Activated T-helper 1 cell treated with anti-CD3 and anti-CD28 coated beads, Interleukin-12 subunit alpha, Interleukin-12 subunit beta, Interleukin-2, Interleukin-4 antibody, amounts not matched to agents 30 ng/mL and 10 ng/mL and 1 ng/mL, durations not matched to agents 14 hours and 24 hours and 36 hours (primary cell): ENCODE measurements at regions of chr16 and their contacts with region 1.

Region 1: GRCh38 chr16:27446721-27447120 is 44.7 kb downstream of the IL21R start:
- DNase-seq: peak; percentile 58
- H3K4me3 Mint-ChIP-seq: peak overlapping the region; percentile 41
- H3K27ac Mint-ChIP-seq: peak overlapping the region; percentile 77
- H3K4me1 Mint-ChIP-seq: peaks cover 64% of the 10 kb centered on the region
- H3K27me3 Mint-ChIP-seq: no peaks in the 10 kb centered on the region

Region 2: GRCh38 chr16:27431773-27432532 is 14.8 kb before region 1 on chr16:
- intact Hi-C with region 1: loop called (anchors 2 kb)
- DNase-seq: no peak
- H3K4me3 Mint-ChIP-seq: no peak overlapping the region
- H3K27ac Mint-ChIP-seq: peak overlapping the region; percentile 67
- H3K4me1 Mint-ChIP-seq: peaks cover 63% of the 10 kb centered on the region
- H3K27me3 Mint-ChIP-seq: peaks cover 2% of the 10 kb centered on the region

Region 3: GRCh38 chr16:27549859-27550581 is 103.3 kb after region 1 on chr16 and contains the starts of genes GTF3C1 and KATNIP:
- intact Hi-C with region 1: no loop called
- DNase-seq: peak; percentile 100
- H3K4me3 Mint-ChIP-seq: peak within 1 kb of the TSS; percentile 99
- H3K27ac Mint-ChIP-seq: peak within 1 kb of the TSS; percentile 90
- H3K4me1 Mint-ChIP-seq: peaks cover 41% of the 10 kb centered on the region
- H3K27me3 Mint-ChIP-seq: no peaks in the 10 kb centered on the region
- total RNA-seq, gene GTF3C1: 66.5 and 69.9 TPM in 2 replicates
- total RNA-seq, gene KATNIP: 12.4 and 17.6 TPM in 2 replicates